ENCODE measurements at regions of chr15 and their contacts with region 1.

Region 1: GRCh38 chr15:72153269-72154000 is 35.2 kb downstream of the SENP8 start:
- DNase-seq: no peak
- H3K4me3 ChIP-seq: no peak overlapping the region
- CTCF ChIP-seq: no peak
- POLR2A ChIP-seq: no peak

Region 2: GRCh38 chr15:71747128-71748083 is 406.0 kb before region 1 on chr15:
- intact Hi-C with region 1: loop called (anchors 5 kb)
- DNase-seq: no peak
- H3K4me3 ChIP-seq: no peak overlapping the region
- CTCF ChIP-seq: no peak
- POLR2A ChIP-seq: no peak